ENCODE measurements at regions of chr3 and their contacts with region 1.

Region 1: DNA sequence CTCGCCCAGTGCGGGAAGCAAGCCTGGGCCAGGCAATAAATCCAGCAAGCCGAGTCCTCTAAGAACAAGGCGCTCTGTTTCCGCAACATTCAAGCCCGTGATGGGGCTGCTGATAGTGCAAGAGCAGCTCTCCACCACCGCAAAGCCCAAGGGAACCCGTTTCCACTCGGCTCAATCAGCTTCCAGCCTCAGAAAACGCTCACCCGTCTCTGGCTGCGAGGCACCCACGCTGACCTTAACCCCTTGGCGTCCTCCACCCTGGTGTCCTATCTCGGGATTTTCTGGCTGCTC is 17.8 kb downstream of the SPATA12 start:
- DNase-seq: peak; percentile 55 to 66
- H3K4me3 ChIP-seq: peak overlapping the region; percentile 84 to 86 (median 85)
- H3K27ac ChIP-seq: peak overlapping the region; percentile 76 to 78
- H3K4me1 ChIP-seq: no peaks in the 10 kb centered on the region
- H3K27me3 ChIP-seq: no peaks in the 10 kb centered on the region
- CTCF ChIP-seq: no peak
- POLR2A ChIP-seq: no peak

Region 2: GRCh38 chr3:57017459-57017845 is 60.8 kb before region 1 on chr3:
- intact Hi-C with region 1: loop called (anchors 10 kb)
- DNase-seq: no peak
- H3K4me3 ChIP-seq: no peak overlapping the region
- H3K27ac ChIP-seq: peak overlapping the region; percentile 10 to 58
- H3K4me1 ChIP-seq: no peaks in the 10 kb centered on the region
- H3K27me3 ChIP-seq: no peaks in the 10 kb centered on the region
- CTCF ChIP-seq: no peak
- POLR2A ChIP-seq: no peak